ENCODE measurements at regions of chr9 and their contacts with region 1.

Region 1: DNA sequence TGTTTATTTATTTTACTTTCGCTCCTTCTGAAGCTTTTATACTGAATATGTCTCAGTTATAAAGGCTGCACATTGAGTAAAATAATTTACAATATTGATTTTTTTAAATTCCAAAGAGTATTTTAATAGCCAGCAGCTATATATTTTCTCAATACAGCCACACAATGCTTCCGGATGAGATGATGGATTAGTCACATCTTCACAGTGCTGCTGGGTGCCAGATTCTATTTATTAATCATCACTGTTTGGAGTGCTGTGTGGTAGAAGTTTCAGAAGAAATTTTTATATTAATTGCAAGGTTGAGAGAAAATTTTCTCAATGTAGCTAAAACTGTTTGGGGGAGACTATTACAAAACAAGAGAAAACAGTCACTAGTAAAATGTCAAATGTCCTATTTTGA is 989.8 kb downstream of the TLE4 start:
- DNase-seq: peak; percentile 65
- H3K4me3 Mint-ChIP-seq: no peak overlapping the region
- H3K27ac Mint-ChIP-seq: peak overlapping the region; percentile 37
- H3K4me1 Mint-ChIP-seq: peaks cover 24% of the 10 kb centered on the region
- H3K27me3 Mint-ChIP-seq: no peaks in the 10 kb centered on the region
- CTCF ChIP-seq: no peak

Region 2: GRCh38 chr9:80305136-80305535 is 256.4 kb before region 1 on chr9:
- CTCF ChIA-PET with region 1: no interaction called
- POLR2A ChIA-PET with region 1: no interaction called
- intact Hi-C with region 1: no loop called
- DNase-seq: no peak
- H3K4me3 Mint-ChIP-seq: no peak overlapping the region
- H3K27ac Mint-ChIP-seq: no peak overlapping the region
- H3K4me1 Mint-ChIP-seq: no peaks in the 10 kb centered on the region
- H3K27me3 Mint-ChIP-seq: no peaks in the 10 kb centered on the region
- CTCF ChIP-seq: no peak

Region 3: DNA sequence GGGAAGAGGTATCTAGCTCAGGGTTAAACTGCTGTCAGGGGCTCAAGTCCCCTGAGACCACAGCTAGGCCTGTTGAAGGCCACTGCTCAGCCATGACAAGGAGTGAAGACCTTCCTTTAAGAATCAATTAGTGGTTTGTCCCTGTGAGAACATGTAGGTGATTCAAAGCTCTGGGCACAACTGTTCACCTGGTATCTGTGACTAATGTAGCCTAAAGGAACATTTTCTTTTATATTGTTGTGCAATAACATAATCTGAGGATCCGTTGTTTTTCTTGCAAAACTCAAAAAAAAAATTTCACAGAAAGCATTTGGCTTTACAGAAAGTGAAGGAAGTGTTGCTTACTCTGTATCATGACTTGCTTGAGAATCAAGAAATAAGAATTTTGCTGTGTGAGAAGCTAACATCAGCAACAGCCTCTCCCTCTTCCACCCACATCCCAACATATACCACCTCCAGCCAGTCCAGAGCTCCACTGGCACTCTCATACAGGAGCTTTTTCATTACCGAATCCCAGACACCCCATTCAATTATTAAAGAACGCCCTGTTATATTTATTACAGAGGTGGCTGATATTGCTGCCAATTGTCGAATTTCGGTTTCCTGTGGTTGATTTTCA is 182.7 kb before region 1 on chr9:
- CTCF ChIA-PET with region 1: interaction called, 3 read pairs
- POLR2A ChIA-PET with region 1: no interaction called
- intact Hi-C with region 1: loop called (anchors 2 kb)
- DNase-seq: peak; percentile 86
- H3K4me3 Mint-ChIP-seq: peak overlapping the region; percentile 45
- H3K27ac Mint-ChIP-seq: peak overlapping the region; percentile 25
- H3K4me1 Mint-ChIP-seq: peaks cover 34% of the 10 kb centered on the region
- H3K27me3 Mint-ChIP-seq: no peaks in the 10 kb centered on the region
- CTCF ChIP-seq: no peak